Activated naive CD4-positive, alpha-beta T cell treated with anti-CD3 and anti-CD28 coated beads for 36 hours (primary cell): ENCODE measurements at regions of chr2 and their contacts with region 1.

Region 1: DNA sequence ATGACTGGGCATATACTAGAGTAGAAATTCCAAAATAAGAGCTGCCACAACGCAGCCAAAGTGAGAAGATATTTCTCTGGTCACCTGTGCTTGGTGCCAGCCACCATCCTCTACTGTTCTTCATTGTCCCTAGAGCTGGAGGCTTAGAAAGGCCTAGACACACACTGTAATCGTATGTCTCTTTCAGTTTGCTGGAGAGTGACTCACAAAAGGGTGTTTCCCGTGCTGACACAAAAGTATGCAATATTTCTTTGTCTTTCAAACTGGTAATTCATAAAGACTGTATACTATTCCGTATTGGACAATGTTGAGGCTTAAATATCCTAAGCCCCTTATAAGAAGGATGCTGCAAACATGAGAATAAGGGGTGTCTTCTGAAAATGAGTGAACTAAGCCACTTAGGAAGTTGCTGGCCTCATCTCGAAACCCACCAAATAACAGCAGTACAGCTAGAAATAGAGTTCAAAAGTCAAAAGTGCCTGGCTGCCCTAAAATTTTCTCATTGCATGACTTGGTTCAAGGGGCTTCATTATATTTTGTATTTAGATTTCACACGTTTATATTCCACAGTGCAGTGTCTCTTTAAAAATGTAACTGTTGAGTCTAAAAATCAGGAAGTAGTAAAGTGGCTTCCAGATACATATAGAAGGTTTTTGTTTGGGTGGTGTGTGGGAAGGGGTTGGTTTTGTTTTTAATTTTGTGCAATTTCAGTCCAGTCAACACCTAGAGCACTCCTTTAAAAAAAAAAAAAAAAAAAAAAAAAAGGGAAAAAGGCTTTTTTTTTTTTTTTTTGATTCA is 601.1 kb downstream of the ARHGAP15 start:
- DNase-seq: peak; percentile 44
- H3K4me3 Mint-ChIP-seq: no peak overlapping the region
- H3K27ac Mint-ChIP-seq: peak overlapping the region; percentile 61
- H3K4me1 Mint-ChIP-seq: peaks cover 32% of the 10 kb centered on the region
- H3K27me3 Mint-ChIP-seq: no peaks in the 10 kb centered on the region

Region 2: DNA sequence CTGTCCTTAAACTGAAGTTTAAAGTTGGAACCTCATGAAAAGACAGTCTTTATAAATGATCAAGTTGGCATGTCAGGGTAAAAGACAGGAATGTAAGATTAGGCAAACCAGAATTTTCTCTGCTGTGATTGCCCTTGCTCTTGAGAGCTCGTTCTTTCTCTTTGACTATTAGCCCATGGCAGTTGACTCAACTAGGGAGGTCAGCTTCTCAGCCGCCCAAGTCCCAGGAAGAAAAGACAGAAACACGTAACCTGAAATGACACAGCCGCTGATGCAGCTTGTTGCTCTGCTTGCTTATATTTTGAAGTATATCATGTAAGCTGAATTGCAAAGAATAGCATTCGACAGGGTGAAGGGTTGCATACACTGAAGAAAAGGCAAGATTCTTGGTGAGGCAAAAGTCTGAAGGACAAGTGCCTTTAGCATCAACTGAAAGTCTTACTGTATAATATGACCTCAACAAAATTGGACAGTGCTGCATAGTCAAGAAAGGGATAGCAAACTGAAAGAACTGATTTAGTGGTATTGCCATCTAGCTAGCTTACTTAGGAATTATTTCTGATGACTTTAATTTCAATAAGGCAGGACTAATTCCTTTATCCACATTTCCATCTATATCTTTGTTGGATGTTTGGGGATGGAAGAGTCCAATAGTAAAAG is 546.4 kb before region 1 on chr2:
- CTCF ChIA-PET with region 1: no interaction called
- intact Hi-C with region 1: no loop called
- DNase-seq: no peak
- H3K4me3 Mint-ChIP-seq: no peak overlapping the region
- H3K27ac Mint-ChIP-seq: no peak overlapping the region
- H3K4me1 Mint-ChIP-seq: peaks cover 46% of the 10 kb centered on the region
- H3K27me3 Mint-ChIP-seq: no peaks in the 10 kb centered on the region

Region 3: DNA sequence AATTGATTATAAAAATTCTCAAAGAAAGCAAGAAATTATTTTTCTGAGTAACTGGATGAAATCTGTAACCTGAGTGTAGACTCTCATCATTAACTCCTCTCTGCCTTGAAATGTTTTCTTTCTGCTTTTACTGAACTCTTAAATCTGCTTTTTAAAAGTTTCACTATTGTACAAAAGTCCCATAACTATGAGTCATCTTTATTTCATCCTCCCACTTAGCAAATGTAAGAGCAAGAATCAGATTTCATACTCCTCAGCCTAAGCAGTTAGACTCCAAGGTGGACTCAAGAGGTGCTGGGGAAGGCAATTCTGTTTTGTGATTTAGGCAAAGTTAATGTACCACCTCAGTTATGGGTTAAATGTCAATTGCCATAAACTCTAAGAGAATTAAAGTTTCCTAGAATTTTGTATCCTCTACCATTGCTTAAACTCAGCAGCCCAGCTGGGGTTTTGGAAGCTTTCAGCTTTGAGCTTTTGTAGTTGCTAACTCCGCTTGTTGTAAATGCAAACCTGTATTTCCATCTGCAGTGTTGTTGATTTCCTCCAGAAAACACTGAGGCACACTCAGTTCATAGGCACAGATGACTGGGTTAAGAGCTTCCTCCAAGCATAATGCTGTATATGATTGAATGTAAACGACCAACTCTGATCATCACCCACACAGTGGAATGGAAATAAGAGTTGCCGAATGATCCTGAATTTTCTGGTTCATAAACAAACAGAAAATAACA is 332.3 kb before region 1 on chr2:
- CTCF ChIA-PET with region 1: no interaction called
- intact Hi-C with region 1: loop called (anchors 5 kb)
- DNase-seq: no peak
- H3K4me3 Mint-ChIP-seq: no peak overlapping the region
- H3K27ac Mint-ChIP-seq: peak overlapping the region; percentile 11
- H3K4me1 Mint-ChIP-seq: peaks cover 47% of the 10 kb centered on the region
- H3K27me3 Mint-ChIP-seq: no peaks in the 10 kb centered on the region

Region 4: DNA sequence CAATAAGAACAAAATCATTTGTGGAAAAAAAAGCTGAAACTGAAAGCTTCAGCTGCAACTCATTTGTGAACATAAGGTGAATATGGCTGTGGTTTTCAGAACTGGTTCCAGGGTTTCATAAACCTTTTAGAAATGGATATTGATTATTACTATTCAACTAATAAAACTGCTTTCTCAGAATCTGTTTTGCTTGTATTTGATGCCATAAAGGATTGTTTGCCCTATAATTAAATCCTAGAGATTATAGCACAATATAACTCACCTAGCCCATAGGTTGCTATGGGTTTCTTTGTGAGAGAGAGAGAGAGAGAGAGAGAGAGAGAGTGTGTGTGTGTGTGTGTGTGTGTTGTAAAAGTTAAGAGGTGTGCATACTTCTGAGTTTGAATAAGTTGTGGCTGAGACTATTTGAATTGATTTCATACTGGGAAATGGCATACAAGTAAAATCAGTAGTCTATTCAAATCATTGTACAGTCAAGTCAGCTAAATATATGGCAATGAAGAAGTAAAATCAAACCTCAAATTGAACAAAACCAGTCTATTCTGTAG is 261.9 kb before region 1 on chr2:
- CTCF ChIA-PET with region 1: no interaction called
- intact Hi-C with region 1: loop called (anchors 1 kb)
- DNase-seq: no peak
- H3K4me3 Mint-ChIP-seq: peak overlapping the region; percentile 12
- H3K27ac Mint-ChIP-seq: peak overlapping the region; percentile 50
- H3K4me1 Mint-ChIP-seq: peaks cover 28% of the 10 kb centered on the region
- H3K27me3 Mint-ChIP-seq: no peaks in the 10 kb centered on the region

Region 5: GRCh38 chr2:143615562-143615961 is 114.8 kb before region 1 on chr2:
- CTCF ChIA-PET with region 1: no interaction called
- intact Hi-C with region 1: no loop called
- DNase-seq: no peak
- H3K4me3 Mint-ChIP-seq: no peak overlapping the region
- H3K27ac Mint-ChIP-seq: no peak overlapping the region
- H3K4me1 Mint-ChIP-seq: peaks cover 35% of the 10 kb centered on the region
- H3K27me3 Mint-ChIP-seq: no peaks in the 10 kb centered on the region

Region 6: GRCh38 chr2:143675021-143675420 is 55.3 kb before region 1 on chr2:
- CTCF ChIA-PET with region 1: no interaction called
- intact Hi-C with region 1: loop called (anchors 1 kb)
- DNase-seq: no peak
- H3K4me3 Mint-ChIP-seq: no peak overlapping the region
- H3K27ac Mint-ChIP-seq: no peak overlapping the region
- H3K4me1 Mint-ChIP-seq: peaks cover 20% of the 10 kb centered on the region
- H3K27me3 Mint-ChIP-seq: no peaks in the 10 kb centered on the region